Naive thymus-derived CD4-positive, alpha-beta T cell (primary cell): ENCODE measurements at regions of chr1 and their contacts with region 1.

Region 1: GRCh38 chr1:92310185-92310597 is 11.3 kb downstream of the RPAP2 start:
- DNase-seq: peak in 5 of 9 donors; percentile 32 to 48 (median 47)
- ATAC-seq: peak; percentile 66
- H3K4me3 ChIP-seq: no peak overlapping the region
- H3K4me3 Mint-ChIP-seq: no peak overlapping the region
- H3K27ac ChIP-seq: no peak overlapping the region
- H3K27ac Mint-ChIP-seq: no peak overlapping the region
- H3K4me1 ChIP-seq: peaks cover 15 to 18% of the 10 kb centered on the region in 2 donors
- H3K4me1 Mint-ChIP-seq: peaks cover 13 to 42% (median 33%) of the 10 kb centered on the region in 7 donors
- H3K27me3 ChIP-seq: no peaks in the 10 kb centered on the region
- H3K27me3 Mint-ChIP-seq: no peaks in the 10 kb centered on the region

Region 2: DNA sequence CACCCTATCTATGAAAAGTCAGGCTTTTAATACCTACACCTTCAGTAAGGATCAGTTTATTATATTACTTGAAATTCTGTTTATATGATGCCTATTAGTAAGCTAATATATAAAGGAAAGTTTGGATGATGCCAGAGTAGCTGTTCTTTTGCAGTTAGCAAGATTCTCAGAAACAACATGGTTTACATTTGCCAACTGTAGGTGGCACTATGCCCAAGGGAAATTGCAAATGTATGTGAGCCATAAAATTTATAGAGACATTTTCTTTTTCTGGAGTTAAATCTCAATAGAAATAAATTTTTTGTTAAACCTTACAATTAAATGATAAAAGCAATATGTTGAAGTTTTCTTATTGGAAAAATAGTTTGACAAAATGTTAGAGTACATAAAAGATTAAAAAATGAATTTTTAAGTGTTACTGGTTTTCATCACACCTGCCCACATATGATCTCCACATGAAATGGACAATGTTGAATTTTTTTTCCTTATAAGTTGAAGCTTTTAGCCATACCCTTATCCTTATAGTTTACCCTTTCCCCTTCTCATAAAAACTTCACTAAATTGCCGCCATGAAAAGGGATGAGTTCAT is 312.5 kb before region 1 on chr1:
- CTCF ChIA-PET with region 1: interaction called, 7 read pairs
- POLR2A ChIA-PET with region 1: no interaction called
- intact Hi-C with region 1: loop called in 1 of 2 experiments (anchors 2 kb)
- DNase-seq: peak in 7 of 9 donors; percentile 26 to 64 (median 49)
- ATAC-seq: peak; percentile 64
- H3K4me3 ChIP-seq: no peak overlapping the region
- H3K4me3 Mint-ChIP-seq: no peak overlapping the region
- H3K27ac ChIP-seq: no peak overlapping the region
- H3K27ac Mint-ChIP-seq: no peak overlapping the region
- H3K4me1 ChIP-seq: no peaks in the 10 kb centered on the region
- H3K4me1 Mint-ChIP-seq: no peaks in the 10 kb centered on the region
- H3K27me3 ChIP-seq: no peaks in the 10 kb centered on the region
- H3K27me3 Mint-ChIP-seq: peaks cover 0 to 10% (median 0%) of the 10 kb centered on the region in 5 donors

Region 3: GRCh38 chr1:92346866-92347640 is 36.9 kb after region 1 on chr1:
- CTCF ChIA-PET with region 1: no interaction called
- POLR2A ChIA-PET with region 1: no interaction called
- intact Hi-C with region 1: loop called in 1 of 2 experiments (anchors 5 kb)
- DNase-seq: no peak
- ATAC-seq: no peak
- H3K4me3 ChIP-seq: no peak overlapping the region
- H3K4me3 Mint-ChIP-seq: no peak overlapping the region
- H3K27ac ChIP-seq: no peak overlapping the region
- H3K27ac Mint-ChIP-seq: peak overlapping the region in 2 of 9 donors; percentile 46 to 62
- H3K4me1 ChIP-seq: no peaks in the 10 kb centered on the region
- H3K4me1 Mint-ChIP-seq: peaks cover 0 to 19% (median 5%) of the 10 kb centered on the region in 7 donors
- H3K27me3 ChIP-seq: no peaks in the 10 kb centered on the region
- H3K27me3 Mint-ChIP-seq: no peaks in the 10 kb centered on the region

Region 4: GRCh38 chr1:92599184-92599583 is 289.0 kb after region 1 on chr1:
- CTCF ChIA-PET with region 1: interaction called, 33 read pairs
- POLR2A ChIA-PET with region 1: interaction called, 4 read pairs
- intact Hi-C with region 1: loop called (anchors 1 kb)
- DNase-seq: peak in 6 of 9 donors; percentile 19 to 61 (median 48)
- ATAC-seq: peak; percentile 59
- H3K4me3 ChIP-seq: no peak overlapping the region
- H3K4me3 Mint-ChIP-seq: no peak overlapping the region
- H3K27ac ChIP-seq: no peak overlapping the region
- H3K27ac Mint-ChIP-seq: no peak overlapping the region
- H3K4me1 ChIP-seq: no peaks in the 10 kb centered on the region
- H3K4me1 Mint-ChIP-seq: peaks cover 4 to 30% (median 9%) of the 10 kb centered on the region in 7 donors
- H3K27me3 ChIP-seq: no peaks in the 10 kb centered on the region
- H3K27me3 Mint-ChIP-seq: no peaks in the 10 kb centered on the region

Region 5: DNA sequence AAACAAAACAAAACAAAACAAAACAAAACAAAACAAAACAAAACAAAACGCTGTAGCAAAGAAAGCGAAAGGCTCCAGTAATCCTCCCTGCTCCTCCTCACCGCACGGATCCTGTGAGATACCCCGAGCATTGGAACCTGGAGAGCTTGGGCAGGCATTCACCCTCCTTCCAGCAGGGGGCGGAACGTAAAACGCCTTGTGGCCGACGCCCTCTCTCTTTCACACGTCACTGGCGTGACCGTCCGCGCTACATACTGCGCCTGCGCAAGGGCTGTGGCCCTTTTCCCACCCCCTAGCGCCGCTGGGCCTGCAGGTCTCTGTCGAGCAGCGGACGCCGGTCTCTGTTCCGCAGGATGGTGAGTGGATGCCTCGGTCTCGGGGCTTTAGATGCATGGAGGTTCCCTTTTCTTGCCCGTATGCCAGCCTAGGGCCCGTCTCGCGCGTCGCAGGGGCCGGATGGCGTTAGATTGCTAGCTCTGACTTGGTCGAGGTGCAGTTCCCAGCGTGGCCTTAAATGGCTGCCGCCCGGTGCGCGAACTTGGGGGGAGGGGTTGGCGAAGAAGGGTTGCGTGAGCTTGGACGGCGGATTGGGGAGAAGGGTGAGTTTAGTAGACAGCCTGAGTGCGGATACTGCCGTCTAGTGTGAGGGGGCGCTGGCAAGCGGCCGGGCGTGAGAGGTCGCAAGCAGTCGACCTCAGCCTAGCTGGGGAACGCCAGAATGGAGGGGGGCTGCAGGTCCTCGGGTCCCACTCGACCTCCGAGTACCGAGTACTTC is 521.8 kb after region 1 on chr1 and contains the start of gene RPL5:
- CTCF ChIA-PET with region 1: interaction called, 3 read pairs
- POLR2A ChIA-PET with region 1: no interaction called
- intact Hi-C with region 1: loop called in 1 of 2 experiments (anchors 10 kb)
- DNase-seq: peak; percentile 94 to 99 (median 98)
- ATAC-seq: peak; percentile 95
- H3K4me3 ChIP-seq: peak within 1 kb of the TSS; percentile 94
- H3K4me3 Mint-ChIP-seq: peak within 1 kb of the TSS; percentile 94 to 100 (median 98)
- H3K27ac ChIP-seq: peak within 1 kb of the TSS; percentile 94
- H3K27ac Mint-ChIP-seq: peak within 1 kb of the TSS; percentile 98 to 100 (median 99)
- H3K4me1 ChIP-seq: peaks cover 16 to 30% of the 10 kb centered on the region in 2 donors
- H3K4me1 Mint-ChIP-seq: peaks cover 29 to 54% (median 44%) of the 10 kb centered on the region in 7 donors
- H3K27me3 ChIP-seq: no peaks in the 10 kb centered on the region
- H3K27me3 Mint-ChIP-seq: peaks cover 0 to 5% (median 0%) of the 10 kb centered on the region in 5 donors
- total RNA-seq, gene RPL5: 764 to 1,693 (median 1,596) TPM